Calu3 (cell line): ENCODE measurements at regions of chr7 and their contacts with region 1.

Region 1: DNA sequence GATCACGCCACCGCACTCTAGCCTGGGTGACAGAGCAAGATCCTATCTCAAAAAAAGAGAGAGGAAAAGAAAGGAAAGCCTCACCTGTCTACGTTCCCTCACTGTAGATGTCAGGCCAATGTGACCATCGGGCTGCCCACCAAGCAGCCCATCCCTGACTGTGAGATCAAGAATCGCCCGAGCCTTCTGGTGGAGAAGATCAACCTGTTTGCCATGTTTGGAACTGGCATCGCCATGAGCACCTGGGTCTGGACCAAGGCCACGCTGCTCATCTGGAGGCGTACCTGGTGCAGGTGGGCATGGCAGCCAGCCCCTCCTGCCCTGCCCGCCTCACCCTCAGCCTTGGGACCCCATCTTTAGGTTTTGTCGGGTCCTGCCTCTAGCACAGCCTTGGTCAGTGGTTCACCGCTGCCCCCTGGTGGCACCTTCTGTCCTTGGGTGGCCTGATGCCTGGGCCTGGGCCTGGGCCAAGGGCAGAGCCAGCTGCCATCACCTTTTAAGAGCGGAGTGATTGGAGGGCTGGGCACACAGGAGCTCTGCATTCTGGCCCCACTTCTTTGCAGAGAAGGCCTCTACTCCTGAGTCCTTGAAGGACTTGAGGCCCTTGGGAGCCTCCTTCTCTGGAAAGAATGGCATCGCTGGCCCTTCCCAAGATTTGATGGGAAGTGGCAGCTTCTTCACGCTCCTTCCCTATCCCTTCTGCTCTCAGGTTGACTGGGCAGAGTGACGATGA is 14.4 kb upstream of the AHCYL2 start:
- DNase-seq: peak; percentile 85
- H3K4me3 Mint-ChIP-seq: no peak overlapping the region
- H3K27ac Mint-ChIP-seq: no peak overlapping the region
- H3K4me1 Mint-ChIP-seq: peaks cover 8% of the 10 kb centered on the region
- H3K27me3 Mint-ChIP-seq: peaks cover 37% of the 10 kb centered on the region
- CTCF ChIP-seq: peak; percentile 86

Region 2: DNA sequence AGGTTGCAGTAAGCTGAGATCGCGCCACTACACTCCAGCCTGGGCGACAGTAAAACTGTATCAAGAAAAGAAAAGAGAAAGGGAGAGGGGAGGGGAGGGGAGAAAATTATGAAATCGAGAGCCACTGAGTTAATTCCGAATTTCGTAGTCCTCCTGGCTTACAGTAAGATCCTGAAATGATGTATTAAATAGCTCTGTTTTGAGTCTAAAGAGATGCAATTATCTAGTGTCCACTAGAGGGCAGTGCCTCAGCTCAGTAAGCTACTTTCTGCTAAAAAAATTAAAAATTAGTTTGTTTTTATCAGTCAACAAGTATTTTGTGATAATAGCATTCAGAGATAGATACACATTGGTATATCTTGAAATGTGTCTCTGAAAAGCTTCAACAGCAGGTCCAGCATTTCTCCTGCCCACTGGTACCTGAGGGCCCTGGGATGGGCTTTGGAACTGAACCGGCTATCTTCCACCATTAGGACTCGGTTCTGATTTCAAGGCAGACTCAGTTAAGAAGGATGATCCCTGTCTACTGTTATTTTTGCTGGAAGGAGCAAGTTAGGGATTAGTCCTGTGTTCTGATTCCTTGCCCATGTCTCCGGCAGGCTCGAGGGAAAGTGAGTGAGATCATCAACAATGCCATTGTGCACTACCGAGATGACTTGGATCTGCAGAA is 46.4 kb before region 1 on chr7:
- CTCF ChIA-PET with region 1: interaction called, 18 read pairs
- intact Hi-C with region 1: loop called (anchors 1 kb)
- DNase-seq: no peak
- H3K4me3 Mint-ChIP-seq: no peak overlapping the region
- H3K27ac Mint-ChIP-seq: no peak overlapping the region
- H3K4me1 Mint-ChIP-seq: no peaks in the 10 kb centered on the region
- H3K27me3 Mint-ChIP-seq: no peaks in the 10 kb centered on the region
- CTCF ChIP-seq: peak; percentile 56